CD4-positive, alpha-beta memory T cell (primary cell): ENCODE measurements at regions of chr7 and their contacts with region 1.

Region 1: DNA sequence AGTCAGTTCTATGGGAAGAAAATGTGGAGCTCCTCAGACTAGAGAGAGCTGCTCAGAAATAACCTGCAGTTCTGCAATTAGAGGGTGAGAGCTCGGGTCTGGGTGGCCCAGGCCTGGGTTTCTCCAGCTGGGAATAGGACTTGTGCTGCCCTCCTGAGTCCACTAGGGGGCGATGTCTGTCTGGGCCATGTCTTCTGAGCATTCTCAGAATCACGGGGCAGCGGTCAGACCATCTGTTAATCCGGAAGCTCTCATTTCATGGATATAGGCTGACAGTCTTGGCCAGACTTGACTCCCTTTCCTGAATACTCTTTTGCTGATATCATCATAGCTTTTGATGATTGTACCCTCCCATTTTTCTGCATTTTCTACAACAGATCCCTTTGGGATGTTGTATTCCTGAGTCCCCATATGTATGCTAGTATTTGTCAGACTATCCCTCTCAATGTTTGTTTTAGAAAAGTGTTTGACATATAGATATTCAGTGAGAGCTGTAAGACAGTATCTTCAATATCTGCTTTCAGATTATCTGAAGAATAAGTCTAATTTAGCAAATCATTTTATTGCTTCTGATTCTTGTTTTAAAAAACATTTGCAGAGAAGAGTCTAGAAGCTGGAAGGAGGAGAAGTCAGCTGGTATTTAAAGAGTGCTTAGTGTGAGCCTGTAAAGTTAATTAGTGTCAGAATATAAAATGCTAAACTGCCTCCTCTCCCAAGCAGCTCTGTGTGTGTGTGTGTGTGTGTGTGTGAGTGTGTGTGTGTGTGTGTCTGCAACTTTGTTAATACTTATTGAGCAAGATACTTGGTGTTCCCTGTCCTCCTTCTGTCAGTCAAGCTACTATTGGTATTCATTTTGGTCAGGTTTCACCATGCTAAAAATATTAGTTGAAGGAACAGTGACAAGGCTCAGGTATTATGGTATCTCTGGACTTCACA is 38.0 kb downstream of the STARD3NL start:
- DNase-seq: peak; percentile 72 to 76 (median 75)
- H3K4me3 ChIP-seq: no peak overlapping the region
- H3K4me3 Mint-ChIP-seq: peak overlapping the region in 7 of 8 donors; percentile 4 to 87 (median 56)
- H3K27ac ChIP-seq: peak overlapping the region; percentile 1
- H3K27ac Mint-ChIP-seq: peak overlapping the region; percentile 43 to 90 (median 83)
- H3K4me1 ChIP-seq: peaks cover 41% of the 10 kb centered on the region
- H3K4me1 Mint-ChIP-seq: peaks cover 24 to 47% (median 36%) of the 10 kb centered on the region in 4 donors
- H3K27me3 ChIP-seq: no peaks in the 10 kb centered on the region
- H3K27me3 Mint-ChIP-seq: no peaks in the 10 kb centered on the region

Region 2: DNA sequence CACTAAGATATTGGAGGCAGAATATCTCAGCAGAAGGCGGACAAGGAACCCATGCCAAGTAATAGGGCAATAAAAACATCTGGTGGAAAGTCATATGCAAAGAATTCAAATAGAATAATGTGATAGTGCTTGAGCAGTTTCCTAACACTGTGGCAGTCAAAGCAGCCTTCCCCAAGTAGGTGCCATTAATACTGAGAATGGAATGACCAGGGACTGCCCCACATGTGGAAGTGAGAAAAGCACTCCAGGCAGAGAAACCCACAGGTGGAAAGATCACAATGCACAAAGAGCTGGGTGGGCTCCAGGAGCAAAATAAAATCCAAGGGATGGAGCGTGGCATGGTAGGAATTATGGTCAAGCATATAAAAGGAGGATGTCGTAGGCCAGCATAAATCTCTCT is 432.0 kb before region 1 on chr7:
- CTCF ChIA-PET with region 1: no interaction called
- POLR2A ChIA-PET with region 1: no interaction called
- intact Hi-C with region 1: no loop called
- DNase-seq: no peak
- H3K4me3 ChIP-seq: no peak overlapping the region
- H3K4me3 Mint-ChIP-seq: no peak overlapping the region
- H3K27ac ChIP-seq: no peak overlapping the region
- H3K27ac Mint-ChIP-seq: no peak overlapping the region
- H3K4me1 ChIP-seq: no peaks in the 10 kb centered on the region
- H3K4me1 Mint-ChIP-seq: peaks cover 0 to 5% (median 2%) of the 10 kb centered on the region in 4 donors
- H3K27me3 ChIP-seq: no peaks in the 10 kb centered on the region
- H3K27me3 Mint-ChIP-seq: peaks cover 1% of the 10 kb centered on the region in 2 donors

Region 3: DNA sequence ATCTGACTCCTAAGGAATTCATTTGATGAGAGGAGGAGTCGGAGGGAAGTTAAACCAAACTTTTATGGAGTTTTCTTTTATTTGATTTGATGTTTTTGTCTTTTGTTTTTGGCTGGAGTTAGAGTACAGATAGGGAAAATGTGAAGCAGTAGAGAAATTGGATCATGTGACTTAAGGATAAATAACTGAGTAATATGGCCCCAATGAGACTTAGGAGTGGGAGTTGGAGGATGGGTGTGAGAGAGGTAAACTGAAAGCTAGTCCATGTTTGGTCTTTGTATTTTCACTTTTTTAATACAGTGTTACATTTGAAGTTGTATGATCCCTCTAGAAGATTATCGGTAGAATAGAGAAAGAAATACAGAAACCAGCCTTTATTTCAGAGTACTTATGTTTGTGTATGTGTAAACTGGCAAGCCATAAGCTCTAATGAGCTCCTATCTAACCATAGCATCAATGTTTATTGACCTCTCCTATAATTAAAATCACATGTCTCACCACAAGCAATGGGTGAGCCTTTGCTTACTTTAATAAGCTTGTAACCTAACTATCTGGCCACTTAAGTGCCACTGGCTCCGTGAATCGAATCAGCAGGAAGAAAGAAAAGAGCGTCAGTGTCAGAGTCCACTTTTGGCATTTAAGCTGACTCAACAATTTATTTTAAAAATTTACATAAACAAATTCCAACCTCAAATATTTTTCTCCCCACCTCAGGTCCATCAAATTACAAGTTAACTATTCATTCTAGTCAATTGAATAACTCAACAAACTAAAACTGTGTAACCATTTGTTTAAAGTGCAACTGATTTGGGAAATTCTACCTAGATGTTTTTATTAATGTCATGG is 181.7 kb before region 1 on chr7:
- CTCF ChIA-PET with region 1: no interaction called
- POLR2A ChIA-PET with region 1: no interaction called
- intact Hi-C with region 1: no loop called
- DNase-seq: no peak
- H3K4me3 ChIP-seq: no peak overlapping the region
- H3K4me3 Mint-ChIP-seq: no peak overlapping the region
- H3K27ac ChIP-seq: no peak overlapping the region
- H3K27ac Mint-ChIP-seq: no peak overlapping the region
- H3K4me1 ChIP-seq: no peaks in the 10 kb centered on the region
- H3K4me1 Mint-ChIP-seq: no peaks in the 10 kb centered on the region
- H3K27me3 ChIP-seq: no peaks in the 10 kb centered on the region
- H3K27me3 Mint-ChIP-seq: peaks cover 1 to 8% of the 10 kb centered on the region in 2 donors

Region 4: GRCh38 chr7:38107486-38107893 is 108.5 kb before region 1 on chr7:
- CTCF ChIA-PET with region 1: interaction called, 79 read pairs
- POLR2A ChIA-PET with region 1: no interaction called
- intact Hi-C with region 1: no loop called
- DNase-seq: peak; percentile 51 to 62 (median 54)
- H3K4me3 ChIP-seq: no peak overlapping the region
- H3K4me3 Mint-ChIP-seq: no peak overlapping the region
- H3K27ac ChIP-seq: no peak overlapping the region
- H3K27ac Mint-ChIP-seq: no peak overlapping the region
- H3K4me1 ChIP-seq: no peaks in the 10 kb centered on the region
- H3K4me1 Mint-ChIP-seq: peaks cover 0 to 2% (median 0%) of the 10 kb centered on the region in 4 donors
- H3K27me3 ChIP-seq: no peaks in the 10 kb centered on the region
- H3K27me3 Mint-ChIP-seq: peaks cover 13 to 15% of the 10 kb centered on the region in 2 donors

Region 5: GRCh38 chr7:38186593-38187314 is 29.2 kb before region 1 on chr7:
- CTCF ChIA-PET with region 1: interaction called, 40 read pairs
- POLR2A ChIA-PET with region 1: interaction called, 4 read pairs
- intact Hi-C with region 1: no loop called
- DNase-seq: no peak
- H3K4me3 ChIP-seq: no peak overlapping the region
- H3K4me3 Mint-ChIP-seq: no peak overlapping the region
- H3K27ac ChIP-seq: no peak overlapping the region
- H3K27ac Mint-ChIP-seq: no peak overlapping the region
- H3K4me1 ChIP-seq: peaks cover 4% of the 10 kb centered on the region
- H3K4me1 Mint-ChIP-seq: peaks cover 28 to 40% (median 37%) of the 10 kb centered on the region in 4 donors
- H3K27me3 ChIP-seq: no peaks in the 10 kb centered on the region
- H3K27me3 Mint-ChIP-seq: no peaks in the 10 kb centered on the region

Region 6: DNA sequence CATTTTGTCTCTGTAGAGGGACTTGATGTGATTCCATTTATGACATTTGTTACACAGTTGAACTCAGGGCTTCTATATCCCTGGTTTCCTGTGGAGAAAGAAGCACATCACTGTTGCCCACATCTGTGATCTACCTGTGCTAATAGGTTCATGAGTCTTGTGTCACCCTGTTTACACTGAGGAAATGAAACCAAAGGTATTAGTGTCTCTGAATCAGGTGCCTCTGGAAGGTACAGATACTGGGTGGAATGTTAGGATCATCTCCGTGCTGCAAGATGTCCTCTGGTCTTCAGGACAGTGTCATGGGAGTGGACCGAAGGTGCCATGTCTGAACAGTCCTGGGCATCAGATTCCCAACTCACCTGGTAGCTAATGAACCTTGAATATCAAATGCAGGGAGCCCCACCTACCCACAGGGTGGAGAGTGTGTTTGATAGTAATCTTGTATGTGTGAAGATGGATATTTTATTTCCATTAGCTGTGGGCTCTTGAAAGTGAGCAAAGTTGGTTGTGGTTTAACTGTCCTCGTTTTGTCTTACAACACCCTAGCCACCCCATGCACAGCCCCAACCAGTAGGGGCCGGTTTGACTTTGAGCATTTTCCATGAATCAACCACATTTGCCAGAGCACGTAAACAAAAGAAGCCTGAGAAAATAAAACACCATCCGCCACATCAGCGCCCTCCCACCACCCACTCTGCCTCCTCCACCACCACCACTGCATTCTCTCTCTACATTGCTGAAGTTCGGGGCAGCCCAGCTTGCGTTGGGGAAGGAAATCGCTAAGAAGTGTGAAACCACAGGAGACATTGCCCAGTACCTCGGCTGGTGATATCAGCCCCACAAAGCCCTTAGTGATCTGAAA is 16.7 kb after region 1 on chr7:
- CTCF ChIA-PET with region 1: interaction called, 60 read pairs
- POLR2A ChIA-PET with region 1: interaction called, 51 read pairs
- intact Hi-C with region 1: loop called (anchors 2 kb)
- DNase-seq: peak; percentile 79 to 91 (median 89)
- H3K4me3 ChIP-seq: peak overlapping the region in 1 of 2 donors; percentile 38
- H3K4me3 Mint-ChIP-seq: peak overlapping the region; percentile 39 to 88 (median 82)
- H3K27ac ChIP-seq: peak overlapping the region; percentile 61
- H3K27ac Mint-ChIP-seq: peak overlapping the region; percentile 91 to 96 (median 96)
- H3K4me1 ChIP-seq: peaks cover 77% of the 10 kb centered on the region
- H3K4me1 Mint-ChIP-seq: peaks cover 27 to 96% (median 67%) of the 10 kb centered on the region in 4 donors
- H3K27me3 ChIP-seq: no peaks in the 10 kb centered on the region
- H3K27me3 Mint-ChIP-seq: no peaks in the 10 kb centered on the region

Region 7: DNA sequence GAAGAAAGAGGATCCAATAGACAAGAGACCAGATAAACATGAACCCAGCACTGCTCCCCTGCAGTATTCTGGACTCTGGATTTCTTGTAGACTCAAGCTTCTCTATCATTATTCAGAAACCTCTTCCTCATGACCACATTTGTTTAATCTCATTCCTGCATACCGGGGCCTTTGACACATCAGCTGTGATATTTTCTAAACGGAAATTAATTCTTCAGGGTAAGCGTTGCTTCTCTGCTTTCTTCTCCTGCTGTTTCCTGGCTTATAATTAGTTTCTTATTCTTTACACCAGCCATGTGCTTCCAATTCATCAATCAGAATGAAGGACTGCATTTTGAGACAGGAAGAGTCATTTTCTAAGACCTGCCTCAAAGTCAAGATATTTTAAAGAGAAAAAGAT is 111.6 kb after region 1 on chr7:
- CTCF ChIA-PET with region 1: interaction called, 135 read pairs
- POLR2A ChIA-PET with region 1: interaction called, 7 read pairs
- intact Hi-C with region 1: no loop called
- DNase-seq: no peak
- H3K4me3 ChIP-seq: no peak overlapping the region
- H3K4me3 Mint-ChIP-seq: peak overlapping the region in 4 of 8 donors; percentile 13 to 57 (median 23)
- H3K27ac ChIP-seq: no peak overlapping the region
- H3K27ac Mint-ChIP-seq: peak overlapping the region in 6 of 7 donors; percentile 15 to 82 (median 35)
- H3K4me1 ChIP-seq: peaks cover 10% of the 10 kb centered on the region
- H3K4me1 Mint-ChIP-seq: peaks cover 4 to 42% (median 13%) of the 10 kb centered on the region in 4 donors
- H3K27me3 ChIP-seq: no peaks in the 10 kb centered on the region
- H3K27me3 Mint-ChIP-seq: no peaks in the 10 kb centered on the region

Region 8: GRCh38 chr7:38351601-38352000 is 135.6 kb after region 1 on chr7:
- CTCF ChIA-PET with region 1: interaction called, 758 read pairs
- POLR2A ChIA-PET with region 1: interaction called, 5 read pairs
- intact Hi-C with region 1: no loop called
- DNase-seq: no peak
- H3K4me3 ChIP-seq: no peak overlapping the region
- H3K4me3 Mint-ChIP-seq: peak overlapping the region; percentile 86 to 94 (median 90)
- H3K27ac ChIP-seq: no peak overlapping the region
- H3K27ac Mint-ChIP-seq: peak overlapping the region in 4 of 7 donors; percentile 52 to 92 (median 73)
- H3K4me1 ChIP-seq: peaks cover 12% of the 10 kb centered on the region
- H3K4me1 Mint-ChIP-seq: peaks cover 14 to 42% (median 26%) of the 10 kb centered on the region in 4 donors
- H3K27me3 ChIP-seq: no peaks in the 10 kb centered on the region
- H3K27me3 Mint-ChIP-seq: no peaks in the 10 kb centered on the region

Region 9: DNA sequence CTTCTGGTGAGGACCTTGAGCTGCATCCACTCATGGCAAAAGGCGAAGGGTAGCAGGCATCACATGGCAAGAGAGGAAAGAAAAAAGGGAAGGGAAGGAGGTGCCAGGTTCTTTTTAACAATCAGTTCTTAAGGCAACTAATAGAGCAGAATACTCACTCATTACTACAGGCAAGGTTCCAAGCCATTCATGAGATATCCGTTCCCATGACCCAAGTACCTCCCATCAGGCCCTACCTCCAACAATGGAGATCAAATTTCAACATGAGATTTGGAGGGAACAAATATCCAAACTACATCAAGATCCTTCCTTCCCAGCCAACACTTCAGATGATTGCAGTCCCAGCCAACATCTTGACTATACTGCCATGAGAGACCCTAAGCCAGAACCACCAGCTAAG is 1311.3 kb after region 1 on chr7:
- CTCF ChIA-PET with region 1: no interaction called
- POLR2A ChIA-PET with region 1: no interaction called
- intact Hi-C with region 1: no loop called
- DNase-seq: no peak
- H3K4me3 ChIP-seq: no peak overlapping the region
- H3K4me3 Mint-ChIP-seq: no peak overlapping the region
- H3K27ac ChIP-seq: no peak overlapping the region
- H3K27ac Mint-ChIP-seq: peak overlapping the region in 2 of 7 donors; percentile 19 to 39
- H3K4me1 ChIP-seq: no peaks in the 10 kb centered on the region
- H3K4me1 Mint-ChIP-seq: no peaks in the 10 kb centered on the region
- H3K27me3 ChIP-seq: no peaks in the 10 kb centered on the region
- H3K27me3 Mint-ChIP-seq: peaks cover 12 to 17% of the 10 kb centered on the region in 2 donors